ENCODE measurements at regions of chr2 and their contacts with region 1.

Region 1: DNA sequence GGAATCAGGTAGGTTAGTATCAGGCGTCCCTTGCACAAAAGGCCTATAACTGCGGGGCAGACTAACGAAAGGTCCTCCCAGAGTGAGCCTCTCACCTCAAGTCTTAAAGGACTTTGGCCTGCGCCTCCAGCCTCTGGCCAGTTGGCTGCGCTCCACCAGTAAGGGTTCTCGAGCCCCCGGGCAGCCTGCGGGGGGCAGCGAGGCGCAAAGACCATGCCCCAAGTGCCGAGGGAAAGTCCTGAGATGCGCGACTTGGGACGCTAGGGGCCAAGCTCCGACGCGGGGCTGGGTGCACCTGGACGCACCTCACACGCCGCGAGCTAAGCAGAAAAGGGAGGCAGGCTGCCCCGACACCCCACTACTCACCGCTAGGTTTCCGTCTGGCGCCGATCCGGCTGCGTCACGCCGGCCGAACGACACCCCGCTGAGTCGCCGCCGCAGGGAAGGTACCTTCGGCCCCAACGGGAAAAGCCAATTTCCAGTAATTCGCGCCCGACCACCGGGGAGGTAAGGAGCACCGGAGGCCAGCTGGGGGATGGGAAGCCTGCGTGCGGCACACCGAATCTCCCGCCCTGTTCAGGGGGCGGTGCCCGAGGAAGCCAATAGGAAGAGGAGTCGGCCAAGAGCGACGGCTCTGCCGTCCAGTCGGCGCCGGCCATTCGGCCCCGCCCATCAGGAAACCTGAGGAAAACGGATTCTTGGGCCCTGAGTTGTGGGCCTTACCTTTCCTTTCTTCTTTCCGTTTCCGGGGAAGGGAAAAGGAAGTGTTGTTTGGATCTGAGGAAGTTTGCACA is at the start of gene ORC2:
- DNase-seq: peak; percentile 81 to 97 (median 94)
- H3K4me3 ChIP-seq: peak within 1 kb of the TSS; percentile 53 to 100 (median 94)
- H3K27ac ChIP-seq: peak within 1 kb of the TSS in 57 of 59 donors; percentile 27 to 90 (median 80)
- H3K27me3 ChIP-seq: no peaks in the 10 kb centered on the region
- CTCF ChIP-seq: peak in 49 of 56 donors; percentile 5 to 61 (median 39)
- total RNA-seq, gene ORC2: 26.1 to 54.8 (median 38.1) TPM

Region 2: DNA sequence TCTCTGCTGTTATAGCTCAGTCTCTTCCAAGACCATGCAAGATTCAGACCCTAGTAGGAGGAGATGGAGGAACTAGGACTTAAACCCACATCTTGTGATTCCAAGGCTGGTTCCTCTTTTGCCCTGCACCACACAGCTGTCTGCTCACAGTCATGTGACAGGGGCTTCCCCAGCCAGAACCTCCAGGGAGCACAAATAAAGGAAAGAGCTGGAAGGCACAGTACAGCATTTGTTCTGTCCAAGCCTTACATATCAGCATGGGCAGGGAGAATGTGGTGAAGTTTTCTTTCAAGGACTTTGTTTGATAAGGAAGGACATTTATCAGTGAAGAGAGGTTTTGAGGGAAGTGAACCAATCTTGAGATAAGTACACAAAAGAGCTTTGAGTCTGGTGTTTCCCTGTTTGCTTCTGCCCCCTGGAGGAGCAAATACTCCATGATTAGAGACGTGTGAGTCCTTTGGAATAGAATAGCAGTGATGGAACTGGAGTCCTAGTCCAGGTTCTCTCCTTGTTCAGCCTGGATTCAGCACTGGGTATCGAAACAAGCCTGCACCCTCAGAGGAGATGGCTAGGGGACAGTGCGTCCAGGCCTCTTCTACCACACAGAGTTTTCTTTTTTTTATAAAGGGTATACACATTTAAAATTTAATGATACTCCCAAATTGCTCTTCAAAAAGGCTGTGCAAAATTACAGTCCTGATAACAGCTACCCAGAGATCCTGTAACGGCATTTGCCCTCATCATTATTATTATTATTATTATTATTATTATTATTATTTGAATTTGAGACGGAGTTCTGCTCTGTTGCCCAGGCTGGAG is 195.0 kb after region 1 on chr2:
- intact Hi-C with region 1: loop called in 1 of 2 experiments (anchors 10 kb)
- DNase-seq: peak in 8 of 10 donors; percentile 29 to 85 (median 62)
- H3K4me3 ChIP-seq: peak overlapping the region in 14 of 59 donors; percentile 0 to 22 (median 12)
- H3K27ac ChIP-seq: peak overlapping the region; percentile 14 to 95 (median 85)
- H3K27me3 ChIP-seq: no peaks in the 10 kb centered on the region
- CTCF ChIP-seq: peak; percentile 35 to 88 (median 76)

Measured in dorsolateral prefrontal cortex (tissue), 120 donors.